ENCODE measurements at regions of chr7 and their contacts with region 1.

Region 1: GRCh38 chr7:76133164-76133775 is 68.4 kb upstream of the SRRM3 start:
- DNase-seq: no peak
- H3K4me3 ChIP-seq: no peak overlapping the region
- H3K27ac ChIP-seq: no peak overlapping the region
- H3K4me1 ChIP-seq: no peaks in the 10 kb centered on the region
- H3K27me3 ChIP-seq: no peaks in the 10 kb centered on the region
- CTCF ChIP-seq: no peak

Region 2: DNA sequence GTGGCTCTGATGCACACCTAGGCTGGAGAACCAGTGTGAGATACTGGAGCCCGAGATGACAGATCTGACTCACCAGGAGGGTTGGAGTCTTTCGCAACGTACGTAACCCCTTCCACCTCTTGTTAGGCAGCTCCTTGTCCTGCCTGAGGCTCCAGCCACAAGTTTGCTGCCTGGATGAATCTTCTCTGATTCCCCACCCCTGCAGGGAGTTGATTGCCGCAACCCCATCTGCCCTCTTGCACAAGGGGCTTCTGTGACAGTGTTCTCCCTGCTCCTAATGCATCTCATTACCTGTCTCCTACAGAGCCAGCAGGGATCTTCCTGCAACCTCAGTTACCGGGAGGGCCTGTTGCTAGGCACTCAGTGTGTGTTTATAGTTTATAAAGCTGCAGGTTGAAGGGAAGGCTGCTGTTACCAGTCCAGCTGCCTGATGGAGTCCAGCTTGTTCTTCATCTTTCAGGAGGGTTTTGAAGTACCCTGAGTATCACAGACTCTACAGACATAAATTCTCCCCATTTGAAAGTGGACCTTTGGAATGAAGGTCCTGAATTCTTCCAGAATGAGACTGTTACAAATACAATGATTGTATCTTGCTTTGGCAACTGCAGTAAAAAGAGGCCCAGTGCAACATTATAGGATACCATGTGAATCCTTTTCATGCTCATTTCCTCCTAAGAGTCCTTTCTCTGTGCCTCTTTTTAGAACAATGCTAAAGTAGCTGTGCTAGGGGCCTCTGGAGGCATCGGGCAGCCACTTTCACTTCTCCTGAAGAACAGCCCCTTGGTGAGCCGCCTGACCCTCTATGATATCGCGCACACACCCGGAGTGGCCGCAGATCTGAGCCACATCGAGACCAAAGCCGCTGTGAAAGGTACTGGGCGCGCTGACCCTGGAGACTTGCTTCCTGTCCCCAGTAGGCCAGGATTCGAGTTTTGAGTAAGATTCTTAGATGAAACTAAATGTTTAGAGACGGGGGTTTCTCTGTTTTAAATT is 78.8 kb before region 1 on chr7:
- CTCF ChIA-PET with region 1: no interaction called
- POLR2A ChIA-PET with region 1: no interaction called
- intact Hi-C with region 1: loop called (anchors 1 kb)
- DNase-seq: peak; percentile 77 to 95
- H3K4me3 ChIP-seq: no peak overlapping the region
- H3K27ac ChIP-seq: 0 out of 2 replicates have a peak overlapping the region, but pooled peaks have one; percentile 14
- H3K4me1 ChIP-seq: peaks cover 30% of the 10 kb centered on the region
- H3K27me3 ChIP-seq: no peaks in the 10 kb centered on the region
- CTCF ChIP-seq: no peak

Region 3: GRCh38 chr7:76122516-76123239 is 10.6 kb before region 1 on chr7:
- CTCF ChIA-PET with region 1: no interaction called
- POLR2A ChIA-PET with region 1: no interaction called
- intact Hi-C with region 1: no loop called
- DNase-seq: no peak
- H3K4me3 ChIP-seq: no peak overlapping the region
- H3K27ac ChIP-seq: no peak overlapping the region
- H3K4me1 ChIP-seq: peaks cover 20% of the 10 kb centered on the region
- H3K27me3 ChIP-seq: no peaks in the 10 kb centered on the region
- CTCF ChIP-seq: no peak